Dorsolateral prefrontal cortex (tissue), 120 donors: ENCODE measurements at regions of chr2 and their contacts with region 1.

Region 1: GRCh38 chr2:62415019-62415431 is 91.0 kb downstream of the TMEM17 start:
- DNase-seq: no peak
- H3K4me3 ChIP-seq: peak overlapping the region in 24 of 59 donors; percentile 0 to 51 (median 20)
- H3K27ac ChIP-seq: peak overlapping the region in 58 of 59 donors; percentile 1 to 96 (median 80)
- H3K27me3 ChIP-seq: no peaks in the 10 kb centered on the region
- CTCF ChIP-seq: no peak

Region 2: DNA sequence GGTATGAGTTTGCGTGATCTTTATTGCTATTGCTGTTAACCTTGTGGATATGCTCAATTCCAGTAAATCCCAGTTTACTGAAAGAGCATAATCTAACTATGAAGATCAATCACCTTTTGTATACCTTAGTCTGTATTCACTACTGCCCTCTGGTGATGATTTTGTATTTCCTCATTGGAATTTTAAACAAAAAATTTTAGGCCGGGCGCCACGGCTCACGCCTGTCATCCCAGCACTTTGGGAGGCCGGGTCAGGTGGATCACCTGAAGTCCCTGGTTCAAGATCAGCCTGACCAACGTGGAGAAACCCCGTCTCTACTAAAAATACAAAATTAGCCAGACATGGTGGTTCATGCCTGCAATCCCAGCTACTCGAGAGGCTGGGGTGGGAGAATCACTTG is 504.4 kb before region 1 on chr2:
- intact Hi-C with region 1: loop called in 1 of 2 experiments (anchors 5 kb)
- DNase-seq: no peak
- H3K4me3 ChIP-seq: no peak overlapping the region
- H3K27ac ChIP-seq: no peak overlapping the region
- H3K27me3 ChIP-seq: no peaks in the 10 kb centered on the region
- CTCF ChIP-seq: peak in 32 of 56 donors; percentile 9 to 40 (median 23)

Region 3: DNA sequence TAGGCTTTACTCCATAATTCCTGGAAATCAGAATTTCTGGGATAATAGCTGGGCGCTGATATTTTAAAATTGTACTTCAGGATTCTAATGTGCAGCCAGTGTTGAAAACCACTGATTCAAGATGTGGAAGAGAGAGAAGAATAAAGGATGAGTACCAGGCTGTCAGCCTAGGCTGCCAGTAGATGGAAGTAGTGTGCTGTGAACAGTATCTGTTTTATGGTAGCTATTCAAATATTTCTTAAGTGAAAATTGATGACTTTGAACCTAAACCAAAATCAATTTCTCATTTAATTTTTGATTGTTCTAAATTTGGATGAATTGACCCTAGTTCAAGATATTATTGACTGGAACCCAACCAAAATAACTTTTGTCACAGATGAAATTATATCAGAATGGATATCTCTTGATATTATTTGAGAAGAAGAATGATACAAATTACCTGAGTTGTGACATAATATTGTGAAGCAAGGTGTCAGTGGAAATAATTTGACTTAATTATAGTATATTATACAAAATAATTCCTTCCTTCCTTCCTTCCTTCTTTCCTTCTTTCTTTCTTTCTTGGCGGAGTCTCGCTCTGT is 421.5 kb before region 1 on chr2:
- intact Hi-C with region 1: loop called (anchors 2 kb)
- DNase-seq: peak in 2 of 10 donors; percentile 41 to 58
- H3K4me3 ChIP-seq: no peak overlapping the region
- H3K27ac ChIP-seq: no peak overlapping the region
- H3K27me3 ChIP-seq: no peaks in the 10 kb centered on the region
- CTCF ChIP-seq: peak; percentile 18 to 80 (median 67)

Region 4: DNA sequence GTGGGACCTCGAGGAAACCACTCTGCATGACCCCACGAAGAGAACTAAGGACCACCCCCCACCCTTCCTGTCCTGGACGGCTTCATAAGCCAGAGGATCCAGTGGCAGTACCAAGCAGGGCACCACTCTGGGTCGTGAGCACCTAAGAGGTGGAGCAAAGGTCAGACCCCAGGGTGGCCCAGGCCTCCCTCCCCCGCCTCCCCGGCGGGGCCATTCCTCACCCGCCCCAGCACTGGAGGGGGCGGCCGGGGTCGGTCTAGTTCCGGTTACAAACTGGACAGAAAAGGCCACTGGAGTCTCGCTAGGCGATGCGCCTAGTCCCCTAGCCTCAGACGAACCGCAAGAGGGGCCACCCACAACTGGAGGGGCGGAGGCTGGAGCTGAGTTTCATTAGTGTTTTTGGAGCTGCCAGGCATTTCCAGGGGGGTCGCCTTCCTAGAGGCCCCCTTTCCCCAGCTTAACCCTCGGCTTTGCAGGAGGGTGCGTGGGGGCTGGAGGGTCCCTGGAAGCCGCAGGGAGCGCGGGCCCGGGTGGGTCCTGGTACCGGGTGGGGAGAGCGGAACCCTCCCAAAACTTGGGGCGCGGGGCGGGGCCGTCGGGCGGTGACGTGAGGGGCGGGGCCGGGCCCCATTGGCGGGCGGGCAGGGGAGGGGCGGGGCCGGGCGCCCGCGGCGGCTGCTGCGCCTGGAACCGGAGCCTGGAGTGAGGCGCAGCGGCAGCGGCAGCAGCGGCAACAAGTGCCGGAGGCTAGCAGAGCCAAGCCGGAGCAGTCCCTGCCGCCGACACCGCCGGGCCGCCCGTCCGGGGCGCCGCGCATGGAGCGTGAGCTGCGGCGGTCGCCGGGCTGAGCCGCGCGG is 219.4 kb before region 1 on chr2 and contains the start of gene B3GNT2:
- intact Hi-C with region 1: loop called (anchors 5 to 10 kb)
- DNase-seq: peak; percentile 37 to 87 (median 69)
- H3K4me3 ChIP-seq: peak within 1 kb of the TSS; percentile 60 to 98 (median 91)
- H3K27ac ChIP-seq: peak within 1 kb of the TSS; percentile 29 to 96 (median 89)
- H3K27me3 ChIP-seq: no peaks in the 10 kb centered on the region
- CTCF ChIP-seq: peak in 3 of 56 donors; percentile 0 to 19 (median 12)
- total RNA-seq, gene B3GNT2: 7.7 to 20.6 (median 12.6) TPM